ENCODE measurements at regions of chr2 and their contacts with region 1.

Region 1: GRCh38 chr2:144366825-144367429 is 153.0 kb downstream of the ZEB2 start:
- DNase-seq: no peak
- ATAC-seq: no peak
- H3K4me3 ChIP-seq: no peak overlapping the region
- H3K27ac ChIP-seq: no peak overlapping the region
- H3K4me1 ChIP-seq: peaks cover 4% of the 10 kb centered on the region; the same call in 1 of the 2 replicates
- H3K27me3 ChIP-seq: no peaks in the 10 kb centered on the region
- CTCF ChIP-seq: no peak
- EP300 ChIP-seq: no peak
- POLR2A ChIP-seq: no peak
- RAD21 ChIP-seq: no peak

Region 2: GRCh38 chr2:144198117-144198516 is 168.8 kb before region 1 on chr2:
- CTCF ChIA-PET with region 1: interaction called, 12 read pairs
- POLR2A ChIA-PET with region 1: no interaction called
- RAD21 ChIA-PET with region 1: no interaction called
- SMC1A ChIA-PET with region 1: interaction called, 3 read pairs
- in situ Hi-C with region 1: no loop called
- intact Hi-C with region 1: no loop called
- DNase-seq: no peak
- ATAC-seq: no peak
- H3K4me3 ChIP-seq: no peak overlapping the region
- H3K27ac ChIP-seq: no peak overlapping the region
- H3K4me1 ChIP-seq: no peaks in the 10 kb centered on the region
- H3K27me3 ChIP-seq: no peaks in the 10 kb centered on the region
- CTCF ChIP-seq: no peak
- EP300 ChIP-seq: no peak
- POLR2A ChIP-seq: no peak
- RAD21 ChIP-seq: no peak

Region 3: GRCh38 chr2:144249035-144249637 is 117.8 kb before region 1 on chr2:
- CTCF ChIA-PET with region 1: no interaction called
- POLR2A ChIA-PET with region 1: no interaction called
- RAD21 ChIA-PET with region 1: no interaction called
- SMC1A ChIA-PET with region 1: no interaction called
- in situ Hi-C with region 1: no loop called
- intact Hi-C with region 1: no loop called
- DNase-seq: no peak
- ATAC-seq: peak; percentile 80
- H3K4me3 ChIP-seq: peak overlapping the region; percentile 25; the same call in 1 of the 2 replicates
- H3K27ac ChIP-seq: peak overlapping the region; percentile 74
- H3K4me1 ChIP-seq: peaks cover 14% of the 10 kb centered on the region; the same call in 1 of the 2 replicates
- H3K27me3 ChIP-seq: no peaks in the 10 kb centered on the region
- CTCF ChIP-seq: no peak
- EP300 ChIP-seq: peak in 1 of 2 experiments; percentile 33; a peak in 1 of 4 replicates
- POLR2A ChIP-seq: no peak
- RAD21 ChIP-seq: no peak

Measured in GM12878 (cell line).